ENCODE measurements at regions of chr14 and their contacts with region 1.

Region 1: DNA sequence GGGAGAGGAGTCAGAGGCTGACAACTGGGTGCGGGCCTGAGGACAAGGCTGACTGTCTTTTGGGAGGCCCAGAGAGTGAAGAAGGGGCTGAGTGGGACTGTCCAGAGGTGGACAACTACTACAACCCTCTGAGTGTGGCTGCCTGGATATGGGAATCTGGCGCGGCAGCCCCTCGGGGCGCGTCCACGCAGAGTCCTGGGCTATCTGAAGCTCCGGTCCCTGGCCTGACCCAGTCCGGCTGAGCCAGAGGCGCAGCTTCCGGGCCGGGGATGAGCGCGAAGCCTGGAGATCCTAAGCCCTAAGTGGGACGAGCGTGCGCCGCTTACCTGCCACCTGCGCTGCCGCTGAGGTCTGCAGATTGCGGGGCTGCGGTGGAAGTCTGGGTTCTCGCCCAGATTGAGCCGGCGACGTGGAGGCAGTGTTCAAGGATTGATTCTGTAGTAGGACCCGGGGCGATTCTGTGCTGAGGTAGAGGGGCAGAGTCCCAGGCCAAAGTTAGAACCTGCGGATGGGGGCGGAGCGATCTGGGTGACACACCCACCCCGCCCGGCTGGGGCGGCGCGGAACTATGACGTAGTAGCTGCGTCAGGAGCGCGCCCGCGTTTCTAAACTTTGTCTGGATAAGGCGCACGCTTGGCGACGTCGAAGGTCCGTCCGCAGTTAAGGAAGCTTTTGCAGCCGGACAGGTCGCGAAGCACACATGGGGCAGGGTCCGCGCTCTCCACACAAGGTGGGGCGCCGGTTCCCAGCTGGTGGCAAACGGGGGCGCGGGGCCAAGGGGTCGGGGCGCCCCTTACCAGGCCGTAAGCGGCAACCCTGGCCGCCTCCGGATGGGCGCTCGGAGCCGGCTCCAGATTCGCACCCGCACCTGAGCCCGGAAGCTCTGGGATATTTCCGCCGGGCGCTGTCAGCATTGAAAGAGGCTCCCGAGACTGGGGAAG is at the starts of genes DHRS1 and NOP9:
- DNase-seq: peak; percentile 91 to 97 (median 96)
- ATAC-seq: peak; percentile 91 to 92
- H3K4me3 ChIP-seq: peak within 1 kb of the TSS; percentile 87
- H3K27ac ChIP-seq: peak within 1 kb of the TSS; percentile 1
- H3K4me1 ChIP-seq: peaks cover 10% of the 10 kb centered on the region
- H3K27me3 ChIP-seq: no peaks in the 10 kb centered on the region
- total RNA-seq, gene DHRS1: 5.9 to 12.0 (median 10.4) TPM
- total RNA-seq, gene NOP9: 19.2 to 20.3 (median 19.6) TPM

Region 2: DNA sequence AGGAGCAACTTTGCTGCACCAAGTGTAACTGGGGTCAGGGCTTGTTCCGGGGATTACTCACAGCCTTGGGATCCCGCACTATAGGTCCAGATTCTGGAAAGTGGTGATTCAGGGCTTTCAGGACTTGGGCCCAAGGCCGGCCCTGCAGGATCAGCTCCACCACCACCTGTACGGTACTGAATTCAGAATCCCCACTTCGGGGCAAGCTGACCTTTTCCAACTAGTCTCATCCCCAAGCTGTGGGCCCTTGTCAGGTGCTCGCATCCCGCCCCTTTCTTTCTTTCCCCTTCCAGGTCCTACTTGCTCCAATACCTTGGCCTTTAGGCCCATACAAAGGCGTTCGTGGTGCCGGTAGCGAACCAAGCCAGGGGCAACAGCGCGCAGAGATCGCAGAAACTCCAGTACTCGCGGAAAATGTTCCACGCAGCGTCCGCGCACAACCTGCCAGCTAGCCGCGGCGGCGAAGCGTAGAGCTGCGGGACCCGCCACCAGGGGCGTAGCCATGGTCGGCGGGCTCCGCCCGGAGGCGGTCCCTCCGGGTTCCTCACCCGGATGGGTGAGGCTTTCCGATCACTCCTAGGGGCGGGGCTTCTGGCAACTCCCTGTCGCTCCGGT is 57.6 kb before region 1 on chr14:
- intact Hi-C with region 1: loop called (anchors 2 to 10 kb)
- DNase-seq: peak; percentile 95 to 97 (median 96)
- ATAC-seq: peak; percentile 94 to 95
- H3K4me3 ChIP-seq: peak overlapping the region; percentile 89
- H3K27ac ChIP-seq: peak overlapping the region; percentile 99
- H3K4me1 ChIP-seq: peaks cover 12% of the 10 kb centered on the region
- H3K27me3 ChIP-seq: no peaks in the 10 kb centered on the region

Region 3: GRCh38 chr14:25006961-25007795 is 707.7 kb after region 1 on chr14:
- intact Hi-C with region 1: no loop called
- DNase-seq: no peak
- ATAC-seq: peak; percentile 65 to 90
- H3K4me3 ChIP-seq: no peak overlapping the region
- H3K27ac ChIP-seq: peak overlapping the region; percentile 22
- H3K4me1 ChIP-seq: peaks cover 9% of the 10 kb centered on the region
- H3K27me3 ChIP-seq: no peaks in the 10 kb centered on the region